Heart right ventricle (tissue), 16 donors: ENCODE measurements at regions of chr2 and their contacts with region 1.

Region 1: DNA sequence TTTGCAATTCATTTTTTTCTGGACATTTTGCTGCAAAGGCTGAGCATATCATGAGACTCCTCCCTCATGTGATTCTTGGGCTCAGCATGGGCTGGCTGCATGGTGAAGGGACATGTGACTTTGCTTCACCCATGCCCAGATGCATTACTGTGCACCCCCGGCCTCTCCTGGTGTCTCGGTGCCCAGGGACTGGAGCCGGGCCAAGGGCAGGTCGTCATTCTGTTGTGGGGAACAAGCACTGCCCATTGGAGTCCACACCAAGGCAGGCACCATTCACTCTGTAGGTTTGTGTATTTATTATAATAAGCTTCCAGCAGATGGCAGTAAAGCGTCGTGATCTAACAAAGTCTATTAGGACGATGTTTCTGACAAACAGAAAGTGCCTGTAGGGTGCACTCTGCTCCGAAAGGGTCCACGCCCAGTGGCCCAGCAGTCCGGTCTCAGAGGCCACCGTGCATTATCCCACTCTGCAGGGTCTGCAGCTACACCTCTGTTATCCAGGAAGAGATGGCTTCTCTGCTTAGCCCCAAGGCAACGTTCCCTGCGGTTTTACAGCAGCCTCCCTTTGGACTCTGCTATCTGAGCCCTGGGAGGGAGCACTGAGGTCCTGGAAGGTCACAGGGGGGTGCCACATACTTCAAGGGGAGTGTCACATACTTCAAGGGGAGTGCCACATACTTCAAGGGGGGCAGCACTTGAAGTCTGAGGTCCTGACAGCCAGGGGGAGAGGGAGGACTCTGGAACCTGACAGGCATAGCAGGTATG is 219.6 kb downstream of the TSN start:
- DNase-seq: peak; percentile 35 to 48
- ATAC-seq: peak; percentile 83 to 93 (median 87)
- H3K4me3 ChIP-seq: peak overlapping the region in 8 of 10 donors; percentile 16 to 52 (median 42)
- H3K27ac ChIP-seq: no peak overlapping the region
- H3K4me1 ChIP-seq: peaks cover 0 to 23% (median 9%) of the 10 kb centered on the region in 9 donors
- H3K27me3 ChIP-seq: peaks cover 0 to 30% (median 4%) of the 10 kb centered on the region in 7 donors
- CTCF ChIP-seq: peak; percentile 36 to 78 (median 63)

Region 2: GRCh38 chr2:121810959-121811853 is 163.9 kb before region 1 on chr2:
- intact Hi-C with region 1: loop called in 2 of 10 experiments (anchors 10 kb)
- DNase-seq: peak; percentile 55 to 72
- ATAC-seq: peak; percentile 69 to 94 (median 90)
- H3K4me3 ChIP-seq: no peak overlapping the region
- H3K27ac ChIP-seq: peak overlapping the region in 5 of 10 donors; percentile 10 to 53 (median 23)
- H3K4me1 ChIP-seq: peaks cover 0 to 10% (median 5%) of the 10 kb centered on the region in 9 donors
- H3K27me3 ChIP-seq: peaks cover 0 to 3% (median 0%) of the 10 kb centered on the region in 7 donors
- CTCF ChIP-seq: peak; percentile 22 to 76 (median 64)

Region 3: GRCh38 chr2:121831841-121832240 is 143.2 kb before region 1 on chr2:
- intact Hi-C with region 1: loop called in 1 of 10 experiments (anchors 10 kb)
- DNase-seq: peak; percentile 76 to 79
- ATAC-seq: peak; percentile 86 to 96 (median 90)
- H3K4me3 ChIP-seq: no peak overlapping the region
- H3K27ac ChIP-seq: peak overlapping the region in 7 of 10 donors; percentile 35 to 78 (median 68)
- H3K4me1 ChIP-seq: peaks cover 0 to 10% (median 6%) of the 10 kb centered on the region in 9 donors
- H3K27me3 ChIP-seq: peaks cover 0 to 6% (median 0%) of the 10 kb centered on the region in 7 donors
- CTCF ChIP-seq: no peak

Region 4: GRCh38 chr2:122451040-122451439 is 476.0 kb after region 1 on chr2:
- intact Hi-C with region 1: loop called in 1 of 10 experiments (anchors 10 kb)
- DNase-seq: no peak
- ATAC-seq: no peak
- H3K4me3 ChIP-seq: no peak overlapping the region
- H3K27ac ChIP-seq: no peak overlapping the region
- H3K4me1 ChIP-seq: no peaks in the 10 kb centered on the region
- H3K27me3 ChIP-seq: no peaks in the 10 kb centered on the region
- CTCF ChIP-seq: peak in 6 of 9 donors; percentile 3 to 31 (median 24)